ENCODE measurements at regions of chr7 and their contacts with region 1.

Region 1: GRCh38 chr7:111780527-111780926 is 218.2 kb upstream of the IMMP2L start:
- DNase-seq: no peak
- ATAC-seq: no peak
- H3K4me3 ChIP-seq: no peak overlapping the region
- H3K27ac ChIP-seq: no peak overlapping the region
- H3K4me1 ChIP-seq: no peaks in the 10 kb centered on the region
- H3K27me3 ChIP-seq: no peaks in the 10 kb centered on the region
- CTCF ChIP-seq: no peak

Region 2: DNA sequence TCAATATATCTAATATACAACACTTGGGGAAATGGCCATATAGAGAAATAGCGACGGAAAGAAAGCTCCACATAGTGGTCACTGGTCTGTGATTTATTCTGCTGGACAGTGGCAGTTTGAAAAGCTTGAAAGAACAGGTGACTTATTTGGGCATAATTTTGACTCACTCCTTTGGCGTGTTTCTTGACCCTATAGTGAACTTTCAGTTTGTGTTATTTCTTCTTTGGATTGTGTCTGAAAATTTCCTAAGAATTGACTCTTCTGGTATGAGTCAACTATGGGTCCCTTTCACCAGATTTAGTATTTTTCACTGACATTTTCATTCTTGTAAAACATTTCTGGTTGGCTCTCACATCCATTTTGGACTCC is 192.5 kb before region 1 on chr7:
- intact Hi-C with region 1: no loop called
- DNase-seq: no peak
- ATAC-seq: peak in 1 of 8 donors; percentile 20
- H3K4me3 ChIP-seq: no peak overlapping the region
- H3K27ac ChIP-seq: no peak overlapping the region
- H3K4me1 ChIP-seq: no peaks in the 10 kb centered on the region
- H3K27me3 ChIP-seq: peaks cover 0 to 2% (median 0%) of the 10 kb centered on the region in 7 donors
- CTCF ChIP-seq: no peak

Region 3: DNA sequence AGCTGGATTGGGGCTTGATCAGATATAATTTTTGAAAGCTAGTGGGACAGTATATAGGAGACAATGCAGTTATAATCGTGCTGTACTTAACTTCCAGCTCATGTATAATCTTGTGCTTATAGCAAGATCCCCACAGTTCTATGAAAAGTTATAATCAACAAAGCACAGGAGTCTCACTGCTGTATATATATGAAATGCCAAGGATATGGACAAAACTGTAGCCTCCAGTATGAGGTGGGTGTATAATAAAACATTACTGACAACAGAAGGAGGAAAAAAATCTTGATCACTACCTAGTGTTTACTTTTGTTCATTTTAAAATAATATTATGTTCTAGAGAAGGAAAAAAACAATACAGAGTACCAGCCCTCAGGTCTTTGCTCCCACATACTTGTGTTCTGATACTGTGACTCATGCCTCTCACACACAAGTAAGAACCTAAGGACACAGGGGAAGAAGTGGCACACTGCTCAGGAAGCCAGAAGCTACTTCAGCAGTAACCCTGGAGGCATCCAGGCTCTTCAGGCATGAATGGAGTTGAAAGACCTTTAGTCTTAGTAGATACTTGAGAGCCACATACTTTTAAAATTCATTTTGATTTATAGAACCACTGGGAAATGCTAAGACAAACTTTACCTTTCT is 47.5 kb after region 1 on chr7:
- intact Hi-C with region 1: loop called in 1 of 10 experiments (anchors 5 kb)
- DNase-seq: no peak
- ATAC-seq: no peak
- H3K4me3 ChIP-seq: no peak overlapping the region
- H3K27ac ChIP-seq: no peak overlapping the region
- H3K4me1 ChIP-seq: peaks cover 0 to under 1% (median 0%) of the 10 kb centered on the region in 9 donors
- H3K27me3 ChIP-seq: no peaks in the 10 kb centered on the region
- CTCF ChIP-seq: no peak